Mammary epithelial cell (primary cell): ENCODE measurements at regions of chr17 and their contacts with region 1.

Region 1: GRCh38 chr17:44389723-44390202 is 314 bp upstream of the ITGA2B start:
- DNase-seq: no peak
- H3K4me3 ChIP-seq: no peak overlapping the region
- H3K27ac ChIP-seq: no peak overlapping the region
- H3K4me1 ChIP-seq: peaks cover 9% of the 10 kb centered on the region
- H3K27me3 ChIP-seq: no peaks in the 10 kb centered on the region
- CTCF ChIP-seq: no peak

Region 2: DNA sequence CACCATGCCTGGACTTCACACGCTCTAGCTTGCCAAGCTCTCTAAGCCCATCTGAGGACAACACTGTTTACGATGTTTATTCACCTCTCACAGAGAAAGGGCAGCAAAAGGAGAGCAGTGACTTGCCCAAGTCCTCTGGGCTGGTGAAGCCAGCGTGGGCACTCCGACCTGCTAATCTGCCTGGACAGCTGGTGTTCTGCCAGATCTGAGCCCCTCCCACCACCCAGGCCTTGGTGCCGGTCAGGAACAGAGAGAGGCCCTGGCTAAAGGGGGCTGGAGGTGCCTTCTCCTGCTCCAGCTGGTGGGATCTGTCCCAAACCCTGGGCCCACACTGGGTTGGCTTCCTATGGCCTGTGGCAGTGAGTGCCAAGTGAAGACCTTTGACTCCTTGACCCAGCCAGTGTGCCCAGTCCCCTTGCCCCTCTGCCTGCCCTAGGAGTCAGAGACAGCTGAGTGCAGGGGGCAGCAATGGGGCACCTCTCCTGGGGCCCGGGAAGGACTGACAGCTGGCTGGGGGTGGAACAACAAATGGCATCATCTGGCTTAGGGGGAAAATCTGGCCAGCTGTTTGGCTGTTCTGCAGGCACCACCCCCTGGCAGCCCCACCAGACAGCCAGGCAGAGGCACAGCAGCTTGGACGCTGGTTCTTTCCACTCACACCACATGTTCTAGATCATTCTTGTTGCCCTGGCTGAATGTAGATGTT is 120.1 kb before region 1 on chr17:
- CTCF ChIA-PET with region 1: no interaction called
- dilution Hi-C with region 1: loop called (anchors 5 kb)
- in situ Hi-C with region 1: no loop called
- intact Hi-C with region 1: no loop called
- DNase-seq: no peak
- H3K4me3 ChIP-seq: no peak overlapping the region
- H3K27ac ChIP-seq: no peak overlapping the region
- H3K4me1 ChIP-seq: no peaks in the 10 kb centered on the region
- H3K27me3 ChIP-seq: no peaks in the 10 kb centered on the region
- CTCF ChIP-seq: no peak

Region 3: GRCh38 chr17:44314869-44315661 is 74.7 kb before region 1 on chr17:
- CTCF ChIA-PET with region 1: no interaction called
- dilution Hi-C with region 1: loop called (anchors 5 kb)
- in situ Hi-C with region 1: no loop called
- intact Hi-C with region 1: no loop called
- DNase-seq: peak; percentile 59
- H3K4me3 ChIP-seq: peak overlapping the region; percentile 15 to 65 (median 55)
- H3K27ac ChIP-seq: no peak overlapping the region
- H3K4me1 ChIP-seq: peaks cover 7% of the 10 kb centered on the region
- H3K27me3 ChIP-seq: no peaks in the 10 kb centered on the region
- CTCF ChIP-seq: no peak

Region 4: DNA sequence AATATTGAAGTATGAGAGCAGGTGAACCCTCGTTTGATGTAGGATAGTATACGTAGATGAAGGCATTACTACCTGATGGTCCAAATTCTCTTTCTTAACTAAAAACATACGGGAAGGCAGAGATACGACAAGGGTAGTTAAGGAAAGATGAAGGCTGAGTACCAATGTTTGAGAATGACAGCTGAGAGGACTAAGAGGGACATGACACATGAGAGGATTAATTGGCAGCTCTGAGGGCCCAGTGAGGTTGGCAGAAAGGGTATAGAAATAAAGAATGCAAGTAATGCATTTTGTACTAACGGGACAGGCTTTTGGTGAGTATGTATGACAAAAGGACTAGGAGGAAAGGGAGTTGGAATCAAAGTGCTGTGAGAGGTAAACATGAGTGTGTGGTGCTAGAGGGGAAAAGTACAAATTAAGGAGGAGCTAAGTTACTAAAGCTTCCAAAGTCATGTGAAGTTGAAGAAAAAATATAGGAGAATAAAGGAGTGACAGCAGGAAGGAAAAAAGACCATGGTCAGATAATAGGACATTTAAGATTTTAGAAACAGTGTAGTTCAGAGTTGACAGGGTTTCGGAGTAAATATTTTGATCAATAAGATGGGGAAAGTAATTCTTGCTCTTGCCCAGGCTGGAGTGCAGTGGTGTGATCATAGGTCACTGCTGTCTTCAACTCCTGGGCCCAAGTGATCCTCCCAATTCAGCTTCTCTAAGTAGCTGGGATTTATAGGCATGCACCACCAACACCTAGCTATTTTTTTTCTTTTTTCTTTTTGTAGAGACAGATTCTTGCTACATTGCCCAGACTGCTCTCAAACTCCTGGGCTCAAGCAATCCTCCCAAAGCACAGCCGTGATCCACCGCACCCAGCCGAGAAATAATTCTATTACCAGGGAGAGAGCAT is 42.7 kb after region 1 on chr17:
- CTCF ChIA-PET with region 1: no interaction called
- dilution Hi-C with region 1: loop called (anchors 5 kb)
- in situ Hi-C with region 1: no loop called
- intact Hi-C with region 1: no loop called
- DNase-seq: no peak
- H3K4me3 ChIP-seq: no peak overlapping the region
- H3K27ac ChIP-seq: no peak overlapping the region
- H3K4me1 ChIP-seq: no peaks in the 10 kb centered on the region
- H3K27me3 ChIP-seq: no peaks in the 10 kb centered on the region
- CTCF ChIP-seq: no peak

Region 5: GRCh38 chr17:44473367-44473766 is 83.6 kb after region 1 on chr17:
- CTCF ChIA-PET with region 1: no interaction called
- dilution Hi-C with region 1: loop called (anchors 5 kb)
- in situ Hi-C with region 1: no loop called
- intact Hi-C with region 1: no loop called
- DNase-seq: no peak
- H3K4me3 ChIP-seq: no peak overlapping the region
- H3K27ac ChIP-seq: no peak overlapping the region
- H3K4me1 ChIP-seq: no peaks in the 10 kb centered on the region
- H3K27me3 ChIP-seq: no peaks in the 10 kb centered on the region
- CTCF ChIP-seq: no peak